ENCODE measurements at regions of chr13 and their contacts with region 1.

Region 1: DNA sequence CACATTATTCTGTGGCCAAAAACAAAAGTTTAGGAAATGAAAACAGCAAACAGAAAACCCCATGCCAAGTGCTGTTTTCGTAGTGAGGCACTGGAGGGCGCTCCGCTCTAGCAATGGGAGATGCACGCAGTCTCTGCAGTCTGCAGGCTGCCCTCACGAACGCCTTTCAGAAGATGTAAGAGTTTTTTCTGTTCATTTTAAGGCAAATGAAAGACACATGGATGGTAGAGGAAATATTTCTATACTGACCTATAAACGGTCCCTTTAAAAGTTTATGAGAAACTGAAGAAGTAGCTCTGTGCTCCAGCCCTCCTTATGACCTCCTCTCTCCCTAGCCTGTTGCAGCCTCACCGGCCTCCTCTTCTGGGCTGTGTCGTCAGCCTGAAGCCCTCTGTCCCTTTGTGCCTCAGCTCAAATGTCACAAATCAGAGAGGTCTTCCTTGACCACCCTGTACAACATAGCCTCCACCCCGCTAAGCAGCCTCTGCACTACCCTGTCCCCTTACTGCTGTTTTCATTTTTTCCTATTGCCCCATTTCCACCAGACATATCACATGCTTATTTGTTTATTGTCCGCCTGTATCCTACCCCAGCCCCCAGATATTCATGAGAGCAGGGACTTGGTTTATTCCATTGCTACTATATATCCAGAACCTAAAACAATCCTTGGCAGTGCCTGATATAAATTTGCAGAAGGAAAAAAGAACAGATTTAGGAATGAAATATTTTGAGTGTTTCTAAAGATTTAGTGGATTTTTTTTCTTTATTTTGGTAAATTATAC is 116.4 kb downstream of the TM9SF2 start:
- DNase-seq: no peak
- H3K4me3 Mint-ChIP-seq: no peak overlapping the region
- H3K27ac Mint-ChIP-seq: no peak overlapping the region
- H3K4me1 Mint-ChIP-seq: no peaks in the 10 kb centered on the region
- H3K27me3 Mint-ChIP-seq: no peaks in the 10 kb centered on the region

Region 2: GRCh38 chr13:99288089-99288488 is 329.6 kb before region 1 on chr13:
- intact Hi-C with region 1: no loop called
- DNase-seq: peak; percentile 38
- H3K4me3 Mint-ChIP-seq: peak overlapping the region; percentile 3
- H3K27ac Mint-ChIP-seq: peak overlapping the region; percentile 80
- H3K4me1 Mint-ChIP-seq: peaks cover 75% of the 10 kb centered on the region
- H3K27me3 Mint-ChIP-seq: no peaks in the 10 kb centered on the region

Region 3: GRCh38 chr13:99528547-99528946 is 89.1 kb before region 1 on chr13:
- intact Hi-C with region 1: loop called (anchors 5 kb)
- DNase-seq: no peak
- H3K4me3 Mint-ChIP-seq: no peak overlapping the region
- H3K27ac Mint-ChIP-seq: no peak overlapping the region
- H3K4me1 Mint-ChIP-seq: peaks cover 34% of the 10 kb centered on the region
- H3K27me3 Mint-ChIP-seq: no peaks in the 10 kb centered on the region